CD4-positive, alpha-beta T cell (primary cell): ENCODE measurements at regions of chr3 and their contacts with region 1.

Region 1: GRCh38 chr3:129439817-129440617 is at the starts of genes IFT122 and MBD4:
- DNase-seq: peak; percentile 97 to 100 (median 98)
- ATAC-seq: peak; percentile 81
- H3K4me3 ChIP-seq: peak within 1 kb of the TSS; percentile 91
- H3K4me3 Mint-ChIP-seq: peak within 1 kb of the TSS; percentile 91
- H3K27ac ChIP-seq: peak within 1 kb of the TSS; percentile 83 to 87
- H3K27ac Mint-ChIP-seq: peak within 1 kb of the TSS; percentile 93
- H3K4me1 ChIP-seq: peaks cover 30% of the 10 kb centered on the region
- H3K4me1 Mint-ChIP-seq: peaks cover 86% of the 10 kb centered on the region
- H3K27me3 ChIP-seq: no peaks in the 10 kb centered on the region
- H3K27me3 Mint-ChIP-seq: no peaks in the 10 kb centered on the region
- CTCF ChIP-seq: no peak
- total RNA-seq, gene IFT122: 22.7 to 26.7 TPM
- total RNA-seq, gene MBD4: 62.0 to 63.9 TPM

Region 2: GRCh38 chr3:128725932-128726690 is 713.9 kb before region 1 on chr3 and contains the start of gene RAB7A:
- CTCF ChIA-PET with region 1: no interaction called
- POLR2A ChIA-PET with region 1: no interaction called
- intact Hi-C with region 1: loop called in 1 of 2 experiments (anchors 5 kb)
- DNase-seq: peak; percentile 94 to 99 (median 97)
- ATAC-seq: peak; percentile 98
- H3K4me3 ChIP-seq: peak within 1 kb of the TSS; percentile 77
- H3K4me3 Mint-ChIP-seq: peak within 1 kb of the TSS; percentile 100
- H3K27ac ChIP-seq: peak within 1 kb of the TSS; percentile 64 to 78
- H3K27ac Mint-ChIP-seq: peak within 1 kb of the TSS; percentile 97
- H3K4me1 ChIP-seq: peaks cover 47% of the 10 kb centered on the region
- H3K4me1 Mint-ChIP-seq: peaks cover 57% of the 10 kb centered on the region
- H3K27me3 ChIP-seq: no peaks in the 10 kb centered on the region
- H3K27me3 Mint-ChIP-seq: no peaks in the 10 kb centered on the region
- CTCF ChIP-seq: no peak
- total RNA-seq, gene RAB7A: 113 to 121 TPM

Region 3: GRCh38 chr3:129428376-129429079 is 11.5 kb before region 1 on chr3 and contains the start of gene EFCAB12:
- CTCF ChIA-PET with region 1: interaction called, 4 read pairs
- POLR2A ChIA-PET with region 1: interaction called, 62 read pairs
- intact Hi-C with region 1: loop called in 1 of 2 experiments (anchors 1 kb)
- DNase-seq: peak; percentile 79 to 95 (median 88)
- ATAC-seq: peak; percentile 95
- H3K4me3 ChIP-seq: peak within 1 kb of the TSS; percentile 66
- H3K4me3 Mint-ChIP-seq: peak within 1 kb of the TSS; percentile 78
- H3K27ac ChIP-seq: peak within 1 kb of the TSS in 1 of 2 donors; percentile 38
- H3K27ac Mint-ChIP-seq: peak within 1 kb of the TSS; percentile 73
- H3K4me1 ChIP-seq: peaks cover 15% of the 10 kb centered on the region
- H3K4me1 Mint-ChIP-seq: peaks cover 22% of the 10 kb centered on the region
- H3K27me3 ChIP-seq: no peaks in the 10 kb centered on the region
- H3K27me3 Mint-ChIP-seq: no peaks in the 10 kb centered on the region
- CTCF ChIP-seq: no peak
- total RNA-seq, gene EFCAB12: 3.2 to 3.4 TPM

Region 4: GRCh38 chr3:129576514-129577352 is 136.7 kb after region 1 on chr3:
- CTCF ChIA-PET with region 1: no interaction called
- POLR2A ChIA-PET with region 1: interaction called, 19 read pairs
- intact Hi-C with region 1: no loop called
- DNase-seq: peak; percentile 59 to 91 (median 66)
- ATAC-seq: peak; percentile 90
- H3K4me3 ChIP-seq: peak overlapping the region; percentile 0
- H3K4me3 Mint-ChIP-seq: peak overlapping the region; percentile 63
- H3K27ac ChIP-seq: peak overlapping the region in 1 of 2 donors; percentile 62
- H3K27ac Mint-ChIP-seq: peak overlapping the region; percentile 97
- H3K4me1 ChIP-seq: peaks cover 57% of the 10 kb centered on the region
- H3K4me1 Mint-ChIP-seq: peaks cover 26% of the 10 kb centered on the region
- H3K27me3 ChIP-seq: no peaks in the 10 kb centered on the region
- H3K27me3 Mint-ChIP-seq: no peaks in the 10 kb centered on the region
- CTCF ChIP-seq: no peak

Region 5: GRCh38 chr3:129893581-129894070 is 453.6 kb after region 1 on chr3 and contains the start of gene TMCC1:
- CTCF ChIA-PET with region 1: no interaction called
- POLR2A ChIA-PET with region 1: interaction called, 12 read pairs
- intact Hi-C with region 1: loop called in 1 of 2 experiments (anchors 5 kb)
- DNase-seq: peak; percentile 79 to 98 (median 88)
- ATAC-seq: peak; percentile 93
- H3K4me3 ChIP-seq: peak within 1 kb of the TSS; percentile 92
- H3K4me3 Mint-ChIP-seq: peak within 1 kb of the TSS; percentile 94
- H3K27ac ChIP-seq: peak within 1 kb of the TSS; percentile 78 to 87
- H3K27ac Mint-ChIP-seq: peak within 1 kb of the TSS; percentile 90
- H3K4me1 ChIP-seq: peaks cover 28% of the 10 kb centered on the region
- H3K4me1 Mint-ChIP-seq: peaks cover 51% of the 10 kb centered on the region
- H3K27me3 ChIP-seq: no peaks in the 10 kb centered on the region
- H3K27me3 Mint-ChIP-seq: no peaks in the 10 kb centered on the region
- CTCF ChIP-seq: no peak
- total RNA-seq, gene TMCC1: 33.3 to 33.8 TPM